ENCODE measurements at regions of chr15 and their contacts with region 1.

Region 1: DNA sequence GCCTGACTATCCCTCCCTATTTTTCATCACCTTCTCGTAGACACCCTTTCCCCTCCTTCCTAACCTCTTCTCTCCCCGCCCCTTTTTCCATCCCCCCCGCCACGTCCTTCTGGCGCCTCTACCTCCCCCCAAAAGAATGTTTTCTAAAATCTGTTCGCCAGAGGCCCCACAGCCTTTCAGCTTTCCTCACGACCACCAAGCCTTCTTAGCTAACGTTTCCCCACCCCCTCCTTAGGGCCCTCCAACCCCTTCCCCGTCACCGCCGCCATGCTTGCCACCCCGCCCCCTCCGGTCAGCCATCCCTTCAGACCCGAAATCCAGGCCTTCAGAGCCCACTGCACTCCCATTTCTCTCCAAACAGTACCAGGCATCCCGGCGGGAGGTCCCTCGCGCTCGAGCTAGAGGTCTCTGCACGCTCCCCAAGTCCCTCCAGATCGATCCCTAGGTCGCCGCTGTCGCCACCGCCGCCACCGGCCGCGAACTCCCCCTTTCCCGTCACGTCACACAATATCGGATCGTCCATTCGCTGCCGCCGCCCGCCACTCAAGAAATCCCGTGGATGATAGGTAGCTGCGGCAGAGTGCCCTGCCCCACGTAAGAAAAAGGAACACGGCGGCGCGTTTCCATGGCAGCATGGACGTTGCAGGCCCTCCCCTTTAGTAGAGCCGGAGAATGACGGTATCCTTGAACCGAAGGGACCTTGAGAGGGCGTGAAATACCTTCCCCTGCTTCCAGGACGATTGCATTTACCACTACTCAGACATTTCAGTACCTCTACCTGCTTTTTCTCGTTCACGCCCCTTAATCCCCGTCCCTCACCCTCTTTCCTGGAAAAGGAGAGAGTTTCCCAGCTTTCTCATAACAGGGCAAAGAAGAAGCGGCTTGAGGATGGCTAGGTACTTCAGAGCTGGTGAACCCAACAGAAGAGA is at the start of gene TP53BP1:
- DNase-seq: peak; percentile 93 to 96 (median 94)
- H3K4me3 ChIP-seq: peak within 1 kb of the TSS; percentile 68 to 91 (median 83)
- H3K4me3 Mint-ChIP-seq: peak within 1 kb of the TSS; percentile 97 to 98
- H3K27ac ChIP-seq: peak within 1 kb of the TSS; percentile 29 to 88
- H3K27ac Mint-ChIP-seq: peak within 1 kb of the TSS; percentile 95 to 99 (median 98)
- H3K4me1 ChIP-seq: peaks cover 10 to 12% of the 10 kb centered on the region in 2 donors
- H3K4me1 Mint-ChIP-seq: peaks cover 13% of the 10 kb centered on the region
- H3K27me3 ChIP-seq: no peaks in the 10 kb centered on the region
- H3K27me3 Mint-ChIP-seq: peaks cover 0 to 2% (median 0%) of the 10 kb centered on the region in 3 donors
- CTCF ChIP-seq: no peak
- polyA plus RNA-seq, gene TP53BP1: 1.8 to 6.7 (median 3.1) TPM

Region 2: GRCh38 chr15:42215913-42216829 is 1276.8 kb before region 1 on chr15:
- intact Hi-C with region 1: no loop called
- DNase-seq: no peak
- H3K4me3 ChIP-seq: no peak overlapping the region
- H3K4me3 Mint-ChIP-seq: no peak overlapping the region
- H3K27ac ChIP-seq: no peak overlapping the region
- H3K27ac Mint-ChIP-seq: peak overlapping the region in 1 of 7 donors; percentile 36
- H3K4me1 ChIP-seq: no peaks in the 10 kb centered on the region
- H3K4me1 Mint-ChIP-seq: peaks cover 7% of the 10 kb centered on the region
- H3K27me3 ChIP-seq: no peaks in the 10 kb centered on the region
- H3K27me3 Mint-ChIP-seq: no peaks in the 10 kb centered on the region
- CTCF ChIP-seq: no peak

Region 3: DNA sequence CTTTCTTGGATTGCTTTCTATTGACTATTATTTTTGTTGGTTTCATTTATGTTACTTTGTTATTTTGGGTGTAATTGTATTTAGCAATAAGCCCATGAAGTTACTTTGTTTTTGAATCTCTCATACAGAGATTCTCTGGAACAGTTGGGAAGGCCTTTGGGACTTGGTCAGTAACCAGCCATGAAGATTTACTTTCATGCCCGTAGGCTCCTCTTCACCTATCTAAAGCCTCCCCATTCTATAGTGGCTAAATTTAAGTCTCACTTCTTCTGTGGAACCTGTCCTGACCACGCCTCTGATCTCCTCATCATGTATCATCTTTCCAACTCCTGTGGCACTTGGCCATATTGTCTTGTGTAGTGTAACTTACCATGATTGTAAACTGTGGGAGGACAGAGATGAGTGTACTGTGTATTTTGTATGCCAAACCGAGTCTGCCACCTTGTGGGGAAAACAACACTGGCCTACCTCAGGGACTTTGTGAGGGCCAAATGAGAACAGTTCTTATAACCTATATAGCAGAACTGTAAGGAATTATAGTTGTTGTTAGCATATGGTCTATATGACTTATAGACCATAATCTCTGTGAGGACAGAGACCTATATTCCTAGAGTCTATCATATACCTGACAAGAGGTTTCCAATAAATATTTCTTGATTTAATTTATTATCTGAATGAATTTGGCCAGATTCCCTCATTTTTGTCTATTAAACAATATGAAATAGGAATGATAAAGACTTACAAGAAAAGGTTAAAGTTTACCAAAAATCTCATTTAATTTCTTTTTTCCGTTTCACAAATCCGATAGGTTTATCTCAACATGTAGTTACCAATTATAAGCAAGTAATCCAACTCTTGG is 842.5 kb before region 1 on chr15:
- intact Hi-C with region 1: no loop called
- DNase-seq: peak; percentile 2 to 19 (median 6)
- H3K4me3 ChIP-seq: no peak overlapping the region
- H3K4me3 Mint-ChIP-seq: no peak overlapping the region
- H3K27ac ChIP-seq: no peak overlapping the region
- H3K27ac Mint-ChIP-seq: no peak overlapping the region
- H3K4me1 ChIP-seq: no peaks in the 10 kb centered on the region
- H3K4me1 Mint-ChIP-seq: peaks cover 3% of the 10 kb centered on the region
- H3K27me3 ChIP-seq: no peaks in the 10 kb centered on the region
- H3K27me3 Mint-ChIP-seq: peaks cover 0 to 2% (median 0%) of the 10 kb centered on the region in 3 donors
- CTCF ChIP-seq: no peak

Region 4: GRCh38 chr15:43510200-43511011 is 17.5 kb after region 1 on chr15:
- intact Hi-C with region 1: loop called in 1 of 2 experiments (anchors 2 kb)
- DNase-seq: peak; percentile 97 to 100 (median 99)
- H3K4me3 ChIP-seq: peak overlapping the region; percentile 59 to 97 (median 78)
- H3K4me3 Mint-ChIP-seq: peak overlapping the region; percentile 90 to 91
- H3K27ac ChIP-seq: peak overlapping the region in 1 of 2 donors; percentile 77
- H3K27ac Mint-ChIP-seq: peak overlapping the region; percentile 18 to 94 (median 86)
- H3K4me1 ChIP-seq: peaks cover 11 to 13% of the 10 kb centered on the region in 2 donors
- H3K4me1 Mint-ChIP-seq: peaks cover 18% of the 10 kb centered on the region
- H3K27me3 ChIP-seq: peaks cover 9 to 11% of the 10 kb centered on the region in 2 donors
- H3K27me3 Mint-ChIP-seq: peaks cover 14 to 18% (median 15%) of the 10 kb centered on the region in 3 donors
- CTCF ChIP-seq: no peak